ENCODE measurements at regions of chr15 and their contacts with region 1.

Region 1: DNA sequence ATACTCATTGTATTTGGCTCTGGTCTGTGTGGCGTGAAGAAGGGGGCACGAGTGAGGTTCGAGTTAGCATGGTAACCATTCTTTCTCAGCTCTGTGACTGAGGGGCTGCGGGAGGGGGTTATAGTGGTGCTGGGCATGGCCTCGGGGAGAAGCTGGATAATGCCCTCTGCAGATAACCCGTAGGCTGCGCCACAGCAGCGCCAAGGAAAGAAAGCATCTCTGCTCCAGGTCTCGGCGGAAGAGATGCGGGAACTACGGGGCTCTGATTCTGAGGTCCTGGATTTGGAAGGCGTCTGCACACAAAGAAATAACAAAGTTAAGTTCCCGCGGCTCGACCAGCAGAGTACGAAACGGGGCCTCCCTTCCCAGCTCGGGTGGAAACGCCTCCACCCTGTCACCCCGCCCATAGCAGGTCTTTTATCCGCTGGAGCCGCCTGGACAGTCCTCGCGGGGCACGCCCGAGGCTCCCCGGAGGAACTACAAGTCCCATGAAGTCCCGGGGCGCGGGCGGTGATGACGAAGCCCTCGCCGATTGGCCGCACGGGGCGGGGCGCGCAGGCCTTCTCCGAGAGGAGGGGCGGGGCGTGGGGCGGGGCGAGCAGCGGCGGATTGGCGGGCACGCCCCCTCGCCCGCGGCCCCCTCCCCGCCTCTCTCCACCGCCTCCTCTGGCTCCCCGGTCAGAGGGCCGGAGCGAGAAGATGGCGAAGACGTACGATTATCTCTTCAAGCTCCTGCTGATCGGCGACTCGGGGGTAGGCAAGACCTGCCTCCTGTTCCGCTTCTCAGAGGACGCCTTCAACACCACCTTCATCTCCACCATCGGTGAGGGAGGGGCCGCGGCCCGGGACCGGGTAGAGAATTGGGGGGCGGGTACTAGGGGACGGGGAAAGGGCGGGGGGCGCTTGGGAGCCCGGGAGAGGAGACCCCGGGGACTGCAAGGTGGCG is at the start of gene RAB8B:
- DNase-seq: peak; percentile 99
- H3K4me3 Mint-ChIP-seq: peak within 1 kb of the TSS; percentile 93
- H3K27ac Mint-ChIP-seq: peak within 1 kb of the TSS; percentile 94
- H3K4me1 Mint-ChIP-seq: peaks cover 44% of the 10 kb centered on the region
- H3K27me3 Mint-ChIP-seq: no peaks in the 10 kb centered on the region
- total RNA-seq, gene RAB8B: 109 to 119 TPM

Region 2: DNA sequence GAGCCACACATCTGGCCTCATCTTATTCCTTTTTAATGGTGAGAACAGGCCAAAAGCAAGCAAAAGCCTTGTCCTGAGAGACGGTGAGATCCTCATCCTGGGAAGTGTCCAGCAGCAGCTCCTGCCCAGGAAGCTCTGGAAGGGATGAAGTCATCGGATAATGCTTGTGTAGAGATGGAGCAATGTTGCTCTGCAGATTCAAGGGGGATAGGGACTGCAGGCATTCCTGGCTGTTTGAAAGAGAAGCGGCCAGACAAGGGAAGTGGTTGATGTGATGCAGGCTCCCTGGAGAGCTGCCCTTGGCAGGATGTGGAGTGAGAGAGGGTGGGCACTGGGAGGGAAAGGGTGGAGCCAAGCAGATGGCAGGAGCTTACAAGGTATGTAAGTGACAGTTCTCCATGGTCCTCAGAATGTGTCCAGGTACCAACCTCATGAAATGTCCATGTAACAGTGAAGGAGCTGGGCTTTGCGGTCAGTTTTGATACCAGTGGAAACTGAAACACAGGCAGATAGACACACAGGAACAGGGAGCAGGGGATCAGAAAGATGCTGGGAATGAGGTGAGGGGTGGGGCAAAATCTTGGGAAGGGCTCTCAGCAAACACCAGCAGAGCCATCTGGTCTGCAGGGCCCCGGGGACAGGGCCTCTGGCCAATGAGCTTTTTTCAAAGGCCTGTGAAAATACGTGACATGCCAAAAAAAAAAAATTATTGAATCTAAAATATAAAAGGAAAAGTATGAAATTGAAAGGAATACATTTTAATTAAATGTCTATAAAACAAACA is 99.7 kb before region 1 on chr15:
- CTCF ChIA-PET with region 1: no interaction called
- POLR2A ChIA-PET with region 1: no interaction called
- intact Hi-C with region 1: no loop called
- DNase-seq: no peak
- H3K4me3 Mint-ChIP-seq: no peak overlapping the region
- H3K27ac Mint-ChIP-seq: no peak overlapping the region
- H3K4me1 Mint-ChIP-seq: no peaks in the 10 kb centered on the region
- H3K27me3 Mint-ChIP-seq: no peaks in the 10 kb centered on the region

Region 3: DNA sequence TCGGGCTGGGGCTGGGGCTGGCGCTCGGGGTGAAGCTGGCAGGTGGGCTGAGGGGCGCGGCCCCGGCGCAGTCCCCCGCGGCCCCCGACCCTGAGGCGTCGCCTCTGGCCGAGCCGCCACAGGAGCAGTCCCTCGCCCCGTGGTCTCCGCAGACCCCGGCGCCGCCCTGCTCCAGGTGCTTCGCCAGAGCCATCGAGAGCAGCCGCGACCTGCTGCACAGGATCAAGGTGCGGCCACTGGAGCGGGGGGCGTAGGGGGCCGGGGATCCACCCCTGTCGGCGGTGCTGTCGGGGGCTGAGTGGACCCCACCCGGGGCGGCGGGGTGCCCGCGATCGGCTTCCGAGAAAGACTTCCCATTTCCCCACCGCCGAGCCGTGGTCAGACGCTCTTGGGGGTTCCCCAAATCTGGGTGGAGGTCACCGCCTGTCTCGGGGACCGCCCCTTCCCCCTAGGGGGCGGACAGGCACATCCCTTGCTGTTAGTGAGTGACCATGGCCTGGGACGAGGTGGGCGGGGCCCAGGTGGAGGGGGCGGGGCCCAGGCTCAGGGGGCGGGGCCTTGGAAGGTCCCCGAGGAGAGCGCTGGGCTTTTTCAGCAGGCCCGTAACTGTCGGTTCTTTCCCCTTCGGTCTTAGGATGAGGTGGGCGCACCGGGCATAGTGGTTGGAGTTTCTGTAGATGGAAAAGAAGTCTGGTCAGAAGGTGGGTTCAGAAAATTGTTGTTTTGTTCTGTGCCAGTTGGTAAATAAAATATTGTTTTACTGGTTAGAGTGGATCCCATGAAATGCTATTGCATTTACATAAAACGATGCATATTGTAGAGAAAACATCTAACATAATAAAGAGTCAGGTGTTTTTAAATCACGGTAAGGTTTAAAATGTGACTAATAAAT is 67.0 kb before region 1 on chr15:
- CTCF ChIA-PET with region 1: no interaction called
- POLR2A ChIA-PET with region 1: no interaction called
- intact Hi-C with region 1: loop called (anchors 2 kb)
- DNase-seq: peak; percentile 95
- H3K4me3 Mint-ChIP-seq: peak overlapping the region; percentile 89
- H3K27ac Mint-ChIP-seq: peak overlapping the region; percentile 78
- H3K4me1 Mint-ChIP-seq: peaks cover 14% of the 10 kb centered on the region
- H3K27me3 Mint-ChIP-seq: no peaks in the 10 kb centered on the region

Region 4: GRCh38 chr15:63172376-63173109 is 16.7 kb before region 1 on chr15:
- CTCF ChIA-PET with region 1: interaction called, 4 read pairs
- POLR2A ChIA-PET with region 1: interaction called, 20 read pairs
- intact Hi-C with region 1: loop called (anchors 1 kb)
- DNase-seq: no peak
- H3K4me3 Mint-ChIP-seq: no peak overlapping the region
- H3K27ac Mint-ChIP-seq: no peak overlapping the region
- H3K4me1 Mint-ChIP-seq: peaks cover 11% of the 10 kb centered on the region
- H3K27me3 Mint-ChIP-seq: no peaks in the 10 kb centered on the region

Region 5: GRCh38 chr15:63212050-63213004 is 23.1 kb after region 1 on chr15:
- CTCF ChIA-PET with region 1: interaction called, 11 read pairs
- POLR2A ChIA-PET with region 1: interaction called, 104 read pairs
- intact Hi-C with region 1: loop called (anchors 1 kb)
- DNase-seq: no peak
- H3K4me3 Mint-ChIP-seq: peak overlapping the region; percentile 64
- H3K27ac Mint-ChIP-seq: peak overlapping the region; percentile 97
- H3K4me1 Mint-ChIP-seq: peaks cover 83% of the 10 kb centered on the region
- H3K27me3 Mint-ChIP-seq: no peaks in the 10 kb centered on the region

Region 6: GRCh38 chr15:63277038-63277892 is 88.1 kb after region 1 on chr15 and contains the start of gene APH1B:
- CTCF ChIA-PET with region 1: interaction called, 3 read pairs
- POLR2A ChIA-PET with region 1: interaction called, 3 read pairs
- intact Hi-C with region 1: loop called (anchors 2 kb)
- DNase-seq: peak; percentile 80
- H3K4me3 Mint-ChIP-seq: peak within 1 kb of the TSS; percentile 80
- H3K27ac Mint-ChIP-seq: peak within 1 kb of the TSS; percentile 59
- H3K4me1 Mint-ChIP-seq: peaks cover 20% of the 10 kb centered on the region
- H3K27me3 Mint-ChIP-seq: no peaks in the 10 kb centered on the region
- total RNA-seq, gene APH1B: 6.6 to 7.0 TPM

Region 7: GRCh38 chr15:63481105-63481810 is 292.1 kb after region 1 on chr15:
- CTCF ChIA-PET with region 1: no interaction called
- POLR2A ChIA-PET with region 1: no interaction called
- intact Hi-C with region 1: loop called (anchors 5 kb)
- DNase-seq: peak; percentile 73
- H3K4me3 Mint-ChIP-seq: no peak overlapping the region
- H3K27ac Mint-ChIP-seq: peak overlapping the region; percentile 85
- H3K4me1 Mint-ChIP-seq: peaks cover 80% of the 10 kb centered on the region
- H3K27me3 Mint-ChIP-seq: no peaks in the 10 kb centered on the region

Region 8: DNA sequence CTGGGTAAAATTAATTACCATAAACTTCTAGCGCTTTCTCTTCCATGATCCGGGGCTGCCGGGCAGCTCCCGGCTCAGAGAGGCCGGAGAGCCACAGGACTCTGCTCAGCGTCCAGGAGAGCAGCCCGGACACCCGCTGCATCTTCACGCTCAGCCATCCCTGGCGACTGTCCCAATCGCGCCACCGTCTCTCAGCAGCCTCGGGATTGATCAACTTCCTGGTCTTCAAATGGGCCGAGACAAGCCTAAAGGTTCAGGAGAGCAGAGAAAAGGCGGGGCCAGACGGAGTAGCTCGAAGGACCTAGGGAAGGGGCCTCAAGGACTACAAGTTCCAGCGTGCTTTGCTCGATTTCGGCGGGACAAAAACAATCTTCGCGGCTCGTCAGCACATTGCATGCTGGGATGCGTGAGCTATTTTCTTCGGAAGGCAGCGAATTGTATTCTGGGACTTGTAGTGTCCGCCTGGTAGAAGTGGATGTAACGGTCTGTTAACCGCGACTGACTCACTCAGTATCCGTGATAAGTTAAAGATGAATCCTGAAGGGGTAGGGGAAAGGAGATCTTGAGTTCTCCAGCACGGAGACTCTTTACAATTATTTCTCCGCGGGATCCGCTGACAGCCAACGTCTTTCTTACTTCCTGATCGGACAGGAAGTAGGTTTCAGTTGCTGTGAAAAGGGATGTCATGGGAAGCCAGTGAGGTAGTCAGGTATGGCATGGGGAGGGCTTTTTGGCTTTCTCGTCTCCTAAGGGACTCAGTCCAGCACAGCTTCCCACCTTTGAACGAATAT is 904.6 kb after region 1 on chr15 and contains the start of gene CIAO2A:
- CTCF ChIA-PET with region 1: no interaction called
- POLR2A ChIA-PET with region 1: no interaction called
- intact Hi-C with region 1: loop called (anchors 10 kb)
- DNase-seq: peak; percentile 98
- H3K4me3 Mint-ChIP-seq: peak within 1 kb of the TSS; percentile 99
- H3K27ac Mint-ChIP-seq: peak within 1 kb of the TSS; percentile 97
- H3K4me1 Mint-ChIP-seq: peaks cover 62% of the 10 kb centered on the region
- H3K27me3 Mint-ChIP-seq: no peaks in the 10 kb centered on the region
- total RNA-seq, gene CIAO2A: 95.4 to 97.4 TPM

Measured in activated CD4-positive, alpha-beta memory T cell treated with anti-CD3 and anti-CD28 coated beads for 36 hours (primary cell).